Naive thymus-derived CD4-positive, alpha-beta T cell (primary cell): ENCODE measurements at regions of chr4 and their contacts with region 1.

Region 1: DNA sequence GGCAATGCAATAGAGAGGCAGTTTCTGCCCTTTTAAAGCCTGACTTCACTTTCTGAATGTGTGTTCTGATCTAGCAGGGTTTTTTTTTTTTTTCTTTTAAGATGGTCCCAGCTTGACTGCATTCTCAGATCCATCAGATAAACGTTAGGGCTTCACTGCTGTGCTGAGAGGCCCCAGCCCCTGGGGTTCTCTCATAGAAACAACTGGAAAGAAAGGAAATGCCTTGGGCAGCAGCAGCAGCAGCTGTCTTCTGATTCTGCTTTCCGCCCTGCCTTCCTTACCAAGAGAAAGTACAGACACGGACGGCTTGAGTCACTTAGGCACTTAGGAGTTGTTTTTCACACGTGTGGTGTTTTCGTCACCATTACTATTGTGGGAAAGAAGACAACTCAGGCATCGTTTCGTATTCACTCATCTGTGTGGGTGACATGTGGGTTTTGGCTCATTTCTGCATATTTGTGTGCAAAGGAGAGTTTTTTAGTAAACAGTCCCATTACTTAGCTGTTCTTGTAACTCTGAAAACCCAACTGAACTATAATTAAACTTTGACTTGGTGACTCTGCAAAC is 172.0 kb downstream of the PTTG2 start:
- DNase-seq: peak; percentile 13 to 78 (median 67)
- ATAC-seq: peak; percentile 78
- H3K4me3 ChIP-seq: peak overlapping the region; percentile 10
- H3K4me3 Mint-ChIP-seq: peak overlapping the region in 9 of 10 donors; percentile 23 to 78 (median 75)
- H3K27ac ChIP-seq: peak overlapping the region; percentile 21
- H3K27ac Mint-ChIP-seq: peak overlapping the region; percentile 87 to 97 (median 90)
- H3K4me1 ChIP-seq: peaks cover 37 to 56% of the 10 kb centered on the region in 2 donors
- H3K4me1 Mint-ChIP-seq: peaks cover 37 to 73% (median 57%) of the 10 kb centered on the region in 7 donors
- H3K27me3 ChIP-seq: no peaks in the 10 kb centered on the region
- H3K27me3 Mint-ChIP-seq: peaks cover 0 to 2% (median 0%) of the 10 kb centered on the region in 5 donors

Region 2: GRCh38 chr4:38062088-38062893 is 69.9 kb before region 1 on chr4:
- CTCF ChIA-PET with region 1: interaction called, 3 read pairs
- POLR2A ChIA-PET with region 1: no interaction called
- intact Hi-C with region 1: loop called (anchors 2 kb)
- DNase-seq: peak; percentile 15 to 55 (median 41)
- ATAC-seq: peak; percentile 78
- H3K4me3 ChIP-seq: peak overlapping the region; percentile 33
- H3K4me3 Mint-ChIP-seq: peak overlapping the region; percentile 66 to 95 (median 84)
- H3K27ac ChIP-seq: no peak overlapping the region
- H3K27ac Mint-ChIP-seq: peak overlapping the region in 8 of 9 donors; percentile 35 to 80 (median 61)
- H3K4me1 ChIP-seq: no peaks in the 10 kb centered on the region
- H3K4me1 Mint-ChIP-seq: peaks cover 0 to 20% (median 10%) of the 10 kb centered on the region in 7 donors
- H3K27me3 ChIP-seq: no peaks in the 10 kb centered on the region
- H3K27me3 Mint-ChIP-seq: no peaks in the 10 kb centered on the region

Region 3: DNA sequence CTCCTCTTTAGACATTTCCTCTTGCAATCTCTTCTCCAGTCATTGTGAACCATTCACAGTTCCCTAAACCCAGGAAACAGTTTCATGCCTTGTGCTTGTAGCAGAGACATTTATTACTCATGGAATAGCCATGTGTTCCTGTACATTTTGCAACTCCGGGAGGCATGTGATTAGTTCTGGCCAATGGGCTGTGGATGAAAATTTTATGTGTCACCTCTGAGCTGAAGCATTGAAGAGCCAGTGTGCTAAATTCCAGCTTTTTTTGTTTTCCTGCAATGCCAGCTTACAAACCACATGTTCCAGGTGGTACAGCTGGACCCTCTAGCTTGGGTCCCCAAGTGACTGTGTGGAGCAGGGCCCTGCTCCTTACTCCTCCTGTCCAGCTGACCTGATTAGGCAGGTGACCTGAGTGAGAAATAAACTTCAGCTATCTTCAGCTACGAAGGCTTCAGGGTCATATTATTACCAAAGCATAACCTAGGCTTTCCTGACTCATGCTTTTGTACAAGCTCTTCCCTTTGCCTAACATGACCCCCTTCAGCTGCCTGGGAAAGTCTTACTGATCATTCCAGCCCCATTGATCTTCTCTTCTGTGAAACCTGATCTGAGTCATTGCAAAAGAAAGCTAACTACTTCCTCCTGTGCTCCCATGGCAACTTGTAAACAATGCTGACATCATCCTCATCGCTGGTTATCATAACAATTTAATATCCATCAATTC is 28.5 kb after region 1 on chr4:
- CTCF ChIA-PET with region 1: no interaction called
- POLR2A ChIA-PET with region 1: no interaction called
- intact Hi-C with region 1: loop called (anchors 1 kb)
- DNase-seq: peak in 8 of 9 donors; percentile 14 to 71 (median 50)
- ATAC-seq: peak; percentile 85
- H3K4me3 ChIP-seq: no peak overlapping the region
- H3K4me3 Mint-ChIP-seq: peak overlapping the region in 2 of 10 donors; percentile 10 to 26
- H3K27ac ChIP-seq: no peak overlapping the region
- H3K27ac Mint-ChIP-seq: peak overlapping the region in 7 of 9 donors; percentile 35 to 81 (median 80)
- H3K4me1 ChIP-seq: peaks cover 10 to 19% of the 10 kb centered on the region in 2 donors
- H3K4me1 Mint-ChIP-seq: peaks cover 17 to 70% (median 35%) of the 10 kb centered on the region in 7 donors
- H3K27me3 ChIP-seq: no peaks in the 10 kb centered on the region
- H3K27me3 Mint-ChIP-seq: no peaks in the 10 kb centered on the region

Region 4: DNA sequence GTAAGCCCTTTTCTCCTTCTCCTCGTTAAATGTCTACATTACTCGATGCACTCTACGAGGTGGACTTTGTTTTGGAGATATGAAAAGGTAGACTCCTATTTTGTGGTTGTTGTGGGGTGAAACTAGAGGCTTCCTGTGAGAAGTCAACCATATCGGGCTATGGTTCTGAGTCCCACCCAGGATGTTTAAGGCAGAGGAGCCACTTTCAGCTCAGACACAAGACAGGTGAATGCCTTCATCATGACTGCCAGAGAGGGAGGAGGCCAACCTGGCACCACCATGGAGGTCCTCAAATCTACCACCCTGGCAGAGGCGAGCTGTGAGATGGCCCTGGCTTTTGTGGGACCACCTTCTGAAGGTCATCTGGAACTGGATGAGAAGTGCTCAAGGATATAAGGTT is 377.4 kb after region 1 on chr4:
- CTCF ChIA-PET with region 1: no interaction called
- POLR2A ChIA-PET with region 1: no interaction called
- intact Hi-C with region 1: loop called (anchors 5 kb)
- DNase-seq: peak in 8 of 9 donors; percentile 30 to 83 (median 76)
- ATAC-seq: peak; percentile 94
- H3K4me3 ChIP-seq: peak overlapping the region; percentile 61
- H3K4me3 Mint-ChIP-seq: peak overlapping the region; percentile 70 to 94 (median 89)
- H3K27ac ChIP-seq: peak overlapping the region; percentile 74
- H3K27ac Mint-ChIP-seq: peak overlapping the region; percentile 71 to 97 (median 89)
- H3K4me1 ChIP-seq: peaks cover 60 to 64% of the 10 kb centered on the region in 2 donors
- H3K4me1 Mint-ChIP-seq: peaks cover 40 to 94% (median 90%) of the 10 kb centered on the region in 7 donors
- H3K27me3 ChIP-seq: no peaks in the 10 kb centered on the region
- H3K27me3 Mint-ChIP-seq: peaks cover 0 to 51% (median 0%) of the 10 kb centered on the region in 5 donors

Region 5: DNA sequence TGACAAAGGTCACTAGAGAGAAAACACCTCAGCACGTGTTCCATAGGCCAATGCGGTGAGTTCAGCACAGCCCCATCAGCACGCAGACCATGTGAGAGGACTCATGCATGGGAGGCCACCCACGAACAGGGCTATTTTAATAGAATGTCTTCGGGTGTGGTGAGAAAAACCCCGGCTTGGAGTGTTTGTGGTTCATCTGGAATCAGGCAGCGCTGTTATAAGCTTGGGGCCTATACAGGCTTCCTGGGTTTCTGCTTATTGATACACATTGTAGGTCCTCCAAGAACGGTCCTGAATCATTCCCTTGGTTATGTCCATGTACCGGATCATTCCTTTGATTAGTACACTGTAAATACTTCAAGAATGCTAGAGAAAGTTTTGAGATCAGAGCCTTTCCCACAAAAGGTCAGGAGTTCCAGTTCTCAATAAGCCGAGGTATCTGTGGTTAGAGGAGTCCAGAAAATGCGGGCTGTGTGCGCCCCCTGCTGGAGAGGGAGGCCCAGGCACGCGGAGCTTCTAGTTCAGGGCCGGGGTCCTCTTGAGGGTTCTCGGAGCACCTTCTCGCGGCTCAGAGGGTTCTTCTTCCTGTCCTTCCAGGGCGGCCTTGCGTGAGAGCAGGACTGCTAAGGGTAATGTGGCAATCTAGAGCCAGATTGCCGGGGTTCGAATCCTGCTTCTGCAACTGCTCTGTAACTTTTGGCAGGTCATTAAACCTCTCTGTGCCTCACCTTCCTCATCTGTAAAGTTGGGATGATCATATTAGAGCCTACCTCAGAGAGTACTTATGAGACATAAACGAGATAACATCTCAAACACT is 598.8 kb after region 1 on chr4:
- CTCF ChIA-PET with region 1: interaction called, 3 read pairs
- POLR2A ChIA-PET with region 1: no interaction called
- intact Hi-C with region 1: loop called in 1 of 2 experiments (anchors 2 kb)
- DNase-seq: peak; percentile 63 to 86 (median 77)
- ATAC-seq: peak; percentile 88
- H3K4me3 ChIP-seq: no peak overlapping the region
- H3K4me3 Mint-ChIP-seq: no peak overlapping the region
- H3K27ac ChIP-seq: no peak overlapping the region
- H3K27ac Mint-ChIP-seq: peak overlapping the region in 2 of 9 donors; percentile 25 to 31
- H3K4me1 ChIP-seq: peaks cover 0 to 7% of the 10 kb centered on the region in 2 donors
- H3K4me1 Mint-ChIP-seq: peaks cover 7 to 20% (median 16%) of the 10 kb centered on the region in 7 donors
- H3K27me3 ChIP-seq: no peaks in the 10 kb centered on the region
- H3K27me3 Mint-ChIP-seq: peaks cover 0 to 12% (median 0%) of the 10 kb centered on the region in 5 donors

Region 6: DNA sequence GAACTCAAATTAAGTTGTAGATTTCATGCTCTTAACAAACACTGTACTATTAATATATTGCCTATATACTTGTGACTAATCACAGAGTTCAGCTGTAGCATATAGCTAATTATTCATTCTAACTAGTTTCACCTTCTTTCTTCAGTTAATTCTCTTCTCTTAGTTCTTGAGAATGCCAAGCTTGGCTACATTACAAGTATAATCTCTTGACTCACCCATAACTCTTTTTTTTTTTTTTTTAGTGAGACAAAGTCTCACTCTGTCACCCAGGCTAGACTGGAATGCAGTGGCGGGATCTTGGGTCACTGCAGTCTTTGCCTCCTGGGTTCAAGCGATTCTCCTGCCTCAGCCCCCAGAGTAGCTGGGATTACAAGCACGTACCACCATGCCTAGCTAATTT is 935.3 kb after region 1 on chr4:
- CTCF ChIA-PET with region 1: interaction called, 10 read pairs
- POLR2A ChIA-PET with region 1: no interaction called
- intact Hi-C with region 1: no loop called
- DNase-seq: no peak
- ATAC-seq: no peak
- H3K4me3 ChIP-seq: no peak overlapping the region
- H3K4me3 Mint-ChIP-seq: no peak overlapping the region
- H3K27ac ChIP-seq: no peak overlapping the region
- H3K27ac Mint-ChIP-seq: no peak overlapping the region
- H3K4me1 ChIP-seq: no peaks in the 10 kb centered on the region
- H3K4me1 Mint-ChIP-seq: peaks cover 9 to 22% (median 19%) of the 10 kb centered on the region in 7 donors
- H3K27me3 ChIP-seq: no peaks in the 10 kb centered on the region
- H3K27me3 Mint-ChIP-seq: no peaks in the 10 kb centered on the region